ENCODE measurements at regions of chr6 and their contacts with region 1.

Region 1: DNA sequence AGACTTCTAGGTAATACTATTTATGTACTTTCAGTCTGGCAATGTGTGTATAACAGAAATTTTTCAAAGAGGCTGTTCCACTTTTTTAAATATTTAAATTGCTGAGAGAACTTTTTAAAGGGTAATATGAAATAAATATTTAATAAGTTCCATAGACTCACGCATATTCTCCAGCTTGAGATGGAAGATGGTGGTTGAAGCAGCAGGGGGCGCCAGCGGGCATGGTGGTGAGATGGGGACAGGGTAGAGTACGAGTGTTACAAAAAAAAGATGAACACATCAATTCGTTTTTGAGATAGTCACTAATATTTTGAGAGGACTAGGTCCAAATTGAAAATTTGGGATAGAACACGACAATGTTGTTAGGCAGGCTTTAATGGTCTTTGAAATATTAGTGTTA is 68.4 kb downstream of the RSPO3 start:
- DNase-seq: peak; percentile 31
- H3K4me3 Mint-ChIP-seq: no peak overlapping the region
- H3K27ac Mint-ChIP-seq: no peak overlapping the region
- H3K4me1 Mint-ChIP-seq: no peaks in the 10 kb centered on the region
- H3K27me3 Mint-ChIP-seq: peaks cover 5% of the 10 kb centered on the region

Region 2: DNA sequence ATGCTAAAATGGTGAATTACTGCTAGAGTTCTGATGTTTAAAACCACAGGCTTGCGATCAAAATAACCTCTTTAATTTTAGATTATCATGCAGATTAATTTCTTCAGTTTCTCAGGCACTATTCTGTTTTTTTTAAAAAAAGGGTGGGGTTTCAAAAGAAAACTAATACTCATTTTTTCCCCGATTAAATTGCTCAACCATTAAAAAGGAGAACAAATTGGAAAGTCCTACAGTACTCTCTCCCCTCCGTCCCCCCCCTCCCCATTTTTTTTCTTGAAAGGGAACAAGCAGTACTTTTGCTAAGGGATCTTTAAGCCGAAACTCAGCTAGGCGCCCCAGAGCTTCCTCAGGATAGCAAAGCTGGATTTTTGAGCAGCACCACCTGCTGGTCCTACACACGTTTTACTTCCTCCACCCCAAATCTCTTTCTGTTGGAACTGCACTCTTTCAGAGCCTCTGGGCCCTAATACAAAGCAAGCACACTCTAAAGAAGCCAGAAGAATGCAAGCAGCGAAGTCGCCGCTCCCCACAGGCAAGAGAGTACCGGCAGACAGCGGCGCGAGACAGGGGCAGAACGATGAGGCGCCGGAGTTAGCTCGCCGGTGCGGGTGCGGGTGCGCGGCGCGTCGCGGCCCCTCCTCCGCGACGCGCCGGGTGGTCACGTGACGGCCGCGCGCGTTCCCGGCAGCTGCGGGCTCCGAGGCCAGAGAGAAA is 79.4 kb after region 1 on chr6 and contains the start of gene RNF146:
- intact Hi-C with region 1: loop called (anchors 1 kb)
- DNase-seq: peak; percentile 63
- H3K4me3 Mint-ChIP-seq: peak within 1 kb of the TSS; percentile 100
- H3K27ac Mint-ChIP-seq: peak within 1 kb of the TSS; percentile 100
- H3K4me1 Mint-ChIP-seq: peaks cover 42% of the 10 kb centered on the region
- H3K27me3 Mint-ChIP-seq: peaks cover 9% of the 10 kb centered on the region
- total RNA-seq, gene RNF146: 18.3 and 20.5 TPM in 2 replicates

Region 3: DNA sequence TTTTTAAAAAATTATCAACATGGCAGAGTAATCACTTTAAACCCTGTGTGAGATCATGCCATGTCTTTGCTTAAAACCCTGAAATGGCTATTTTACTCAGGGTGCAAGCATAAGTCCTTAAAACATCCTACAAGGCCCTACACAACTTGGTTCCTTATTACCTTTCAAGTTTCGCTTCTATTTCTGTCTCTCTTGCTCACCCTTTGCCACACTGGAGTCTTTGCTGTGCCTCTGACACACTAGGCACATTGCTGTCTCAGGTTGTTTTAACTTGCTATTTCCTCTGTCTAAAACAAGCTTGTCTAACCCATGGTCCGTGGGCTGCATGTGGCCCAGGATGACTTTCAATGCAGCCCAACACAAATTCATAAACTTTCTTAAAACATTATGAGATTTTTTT is 216.7 kb after region 1 on chr6:
- intact Hi-C with region 1: no loop called
- DNase-seq: no peak
- H3K4me3 Mint-ChIP-seq: no peak overlapping the region
- H3K27ac Mint-ChIP-seq: peak overlapping the region; percentile 67
- H3K4me1 Mint-ChIP-seq: peaks cover 18% of the 10 kb centered on the region
- H3K27me3 Mint-ChIP-seq: no peaks in the 10 kb centered on the region

Region 4: GRCh38 chr6:127539272-127539671 is 352.4 kb after region 1 on chr6:
- intact Hi-C with region 1: loop called (anchors 1 kb)
- DNase-seq: no peak
- H3K4me3 Mint-ChIP-seq: no peak overlapping the region
- H3K27ac Mint-ChIP-seq: no peak overlapping the region
- H3K4me1 Mint-ChIP-seq: peaks cover 5% of the 10 kb centered on the region
- H3K27me3 Mint-ChIP-seq: peaks cover 17% of the 10 kb centered on the region

Measured in activated T-helper 1 cell treated with anti-CD3 and anti-CD28 coated beads, Interleukin-12 subunit alpha, Interleukin-12 subunit beta, Interleukin-2, Interleukin-4 antibody, amounts not matched to agents 30 ng/mL and 10 ng/mL and 1 ng/mL, durations not matched to agents 14 hours and 24 hours and 36 hours (primary cell).